Ascending aorta (tissue), 2 donors: ENCODE measurements at regions of chr9 and their contacts with region 1.

Region 1: DNA sequence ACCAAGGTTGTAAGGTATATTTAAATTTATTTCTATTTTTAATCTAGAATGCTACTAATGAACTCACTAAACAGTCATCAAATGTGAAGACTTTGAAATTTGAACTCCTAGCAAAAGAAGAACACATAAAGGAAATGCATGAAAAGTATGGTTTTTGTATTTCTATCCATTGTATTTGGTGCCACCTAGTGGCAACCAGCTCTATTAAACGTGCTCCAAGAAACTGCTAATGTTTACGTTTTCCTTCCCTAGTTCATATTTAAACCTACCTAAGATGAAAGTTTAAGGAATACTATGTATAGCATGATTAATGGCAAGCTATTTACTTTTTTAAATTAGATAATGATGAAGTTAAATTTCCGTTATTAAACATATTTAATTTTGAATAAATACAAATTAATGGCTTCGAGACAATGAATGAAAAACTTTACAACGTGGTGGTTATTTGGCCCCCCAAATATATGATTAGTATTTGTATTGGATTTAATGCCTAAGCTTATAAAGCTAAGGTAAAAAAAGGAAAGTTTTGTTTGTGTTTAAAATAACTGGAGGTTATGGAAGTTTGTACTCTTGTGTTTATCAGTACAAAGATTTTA is 115.9 kb upstream of the SH3GL2 start:
- DNase-seq: peak in 1 of 2 donors; percentile 60
- H3K4me3 ChIP-seq: no peak overlapping the region
- H3K27ac ChIP-seq: no peak overlapping the region
- H3K4me1 ChIP-seq: no peaks in the 10 kb centered on the region
- H3K27me3 ChIP-seq: no peaks in the 10 kb centered on the region
- CTCF ChIP-seq: peak; percentile 35 to 69 (median 62)

Region 2: GRCh38 chr9:17063535-17064135 is 399.3 kb before region 1 on chr9:
- intact Hi-C with region 1: loop called (anchors 5 kb)
- DNase-seq: no peak
- H3K4me3 ChIP-seq: no peak overlapping the region
- H3K27ac ChIP-seq: no peak overlapping the region
- H3K4me1 ChIP-seq: no peaks in the 10 kb centered on the region
- H3K27me3 ChIP-seq: no peaks in the 10 kb centered on the region
- CTCF ChIP-seq: peak in 2 of 3 experiments; percentile 68 to 71

Region 3: GRCh38 chr9:17531642-17532254 is 68.8 kb after region 1 on chr9:
- intact Hi-C with region 1: no loop called
- DNase-seq: no peak
- H3K4me3 ChIP-seq: no peak overlapping the region
- H3K27ac ChIP-seq: no peak overlapping the region
- H3K4me1 ChIP-seq: no peaks in the 10 kb centered on the region
- H3K27me3 ChIP-seq: no peaks in the 10 kb centered on the region
- CTCF ChIP-seq: peak in 2 of 3 experiments; percentile 28 to 52